GM23248 (cell line): ENCODE measurements at regions of chr3 and their contacts with region 1.

Region 1: DNA sequence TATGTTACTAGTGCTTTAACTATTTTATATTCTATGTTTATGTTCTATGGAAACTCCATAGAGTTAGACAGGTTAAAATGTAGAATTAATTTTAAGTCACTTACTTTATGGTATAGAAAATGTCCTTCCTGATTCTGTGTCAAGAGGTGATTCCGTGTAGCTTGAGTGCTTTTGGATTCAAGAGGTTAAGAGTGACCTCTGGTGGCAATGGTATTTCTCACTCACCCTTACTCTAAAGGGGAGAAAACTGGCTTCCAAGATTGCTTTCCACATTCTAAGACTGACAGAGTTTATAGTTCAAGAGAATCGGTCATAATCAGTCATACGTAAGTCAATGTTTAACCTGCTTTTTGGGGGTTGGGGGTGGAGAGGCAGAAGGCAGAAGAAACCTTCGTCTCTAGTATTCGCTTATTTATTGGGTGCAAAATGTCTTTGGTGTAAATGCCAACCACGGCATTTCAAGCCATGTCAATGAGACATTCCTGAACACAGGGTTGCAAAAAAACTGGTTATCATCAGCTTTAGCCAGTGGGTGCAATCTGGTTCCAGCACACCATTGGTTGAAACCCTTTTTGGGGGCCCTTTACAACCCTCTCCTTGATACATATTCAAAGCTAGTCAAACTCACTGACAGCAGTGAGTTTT is 92.0 kb upstream of the VGLL3 start:
- DNase-seq: peak; percentile 82
- H3K4me3 ChIP-seq: no peak overlapping the region
- H3K27ac ChIP-seq: no peak overlapping the region
- H3K4me1 ChIP-seq: 0 out of 2 replicates have a peak, but pooled peaks cover 18% of the 10 kb centered on the region
- H3K27me3 ChIP-seq: no peaks in the 10 kb centered on the region

Region 2: GRCh38 chr3:86785386-86785785 is 297.5 kb before region 1 on chr3:
- in situ Hi-C with region 1: loop called (anchors 5 kb)
- DNase-seq: peak; percentile 77
- H3K4me3 ChIP-seq: no peak overlapping the region
- H3K27ac ChIP-seq: no peak overlapping the region
- H3K4me1 ChIP-seq: peaks cover 48% of the 10 kb centered on the region
- H3K27me3 ChIP-seq: no peaks in the 10 kb centered on the region

Region 3: DNA sequence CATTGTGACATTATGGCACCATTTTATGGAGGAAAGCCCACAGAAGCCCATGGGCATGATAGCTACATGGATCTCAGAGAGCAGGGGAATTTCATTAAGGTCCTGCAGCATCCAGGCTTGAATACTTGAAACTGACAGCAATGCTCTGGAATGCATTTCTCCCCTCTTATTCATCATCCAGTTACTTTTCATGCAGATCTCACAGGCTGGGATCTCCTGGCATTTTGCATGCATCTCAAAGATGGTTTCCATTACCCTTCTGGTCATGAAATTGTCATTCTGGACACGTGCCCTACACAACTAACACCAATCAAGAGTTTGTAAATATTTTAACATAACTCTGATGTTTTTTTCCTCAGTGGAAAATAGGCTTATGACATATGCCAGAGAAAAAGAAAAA is 124.4 kb before region 1 on chr3:
- in situ Hi-C with region 1: loop called (anchors 10 kb)
- DNase-seq: peak; percentile 90
- H3K4me3 ChIP-seq: no peak overlapping the region; the same call in 1 of the 2 replicates
- H3K27ac ChIP-seq: peak overlapping the region; percentile 64
- H3K4me1 ChIP-seq: peaks cover 88% of the 10 kb centered on the region
- H3K27me3 ChIP-seq: no peaks in the 10 kb centered on the region

Region 4: GRCh38 chr3:86982883-86983282 is 100.0 kb before region 1 on chr3:
- in situ Hi-C with region 1: loop called (anchors 10 kb)
- DNase-seq: peak; percentile 90
- H3K4me3 ChIP-seq: peak overlapping the region; percentile 89
- H3K27ac ChIP-seq: peak overlapping the region; percentile 79
- H3K4me1 ChIP-seq: peaks cover 89% of the 10 kb centered on the region
- H3K27me3 ChIP-seq: no peaks in the 10 kb centered on the region